WTC11 (cell line): ENCODE measurements at regions of chr22 and their contacts with region 1.

Region 1: GRCh38 chr22:30386960-30387827 is at the start of gene RNF215:
- DNase-seq: peak; percentile 96
- ATAC-seq: peak; percentile 83
- H3K4me3 Mint-ChIP-seq: peak within 1 kb of the TSS; percentile 79
- H3K27ac Mint-ChIP-seq: peak within 1 kb of the TSS; percentile 96
- H3K4me1 Mint-ChIP-seq: peaks cover 14% of the 10 kb centered on the region
- H3K27me3 Mint-ChIP-seq: peaks cover 11% of the 10 kb centered on the region
- CTCF ChIP-seq: peak; percentile 96
- total RNA-seq, gene RNF215: 25.4 to 28.6 TPM (median 27.6 TPM) in 3 replicates

Region 2: GRCh38 chr22:30262917-30263741 is 124.1 kb before region 1 on chr22:
- CTCF ChIA-PET with region 1: interaction called, 17 read pairs
- POLR2A ChIA-PET with region 1: no interaction called
- DNase-seq: peak; percentile 94
- ATAC-seq: peak; percentile 77
- H3K4me3 Mint-ChIP-seq: no peak overlapping the region
- H3K27ac Mint-ChIP-seq: no peak overlapping the region
- H3K4me1 Mint-ChIP-seq: peaks cover 7% of the 10 kb centered on the region
- H3K27me3 Mint-ChIP-seq: peaks cover 7% of the 10 kb centered on the region
- CTCF ChIP-seq: peak; percentile 99

Region 3: DNA sequence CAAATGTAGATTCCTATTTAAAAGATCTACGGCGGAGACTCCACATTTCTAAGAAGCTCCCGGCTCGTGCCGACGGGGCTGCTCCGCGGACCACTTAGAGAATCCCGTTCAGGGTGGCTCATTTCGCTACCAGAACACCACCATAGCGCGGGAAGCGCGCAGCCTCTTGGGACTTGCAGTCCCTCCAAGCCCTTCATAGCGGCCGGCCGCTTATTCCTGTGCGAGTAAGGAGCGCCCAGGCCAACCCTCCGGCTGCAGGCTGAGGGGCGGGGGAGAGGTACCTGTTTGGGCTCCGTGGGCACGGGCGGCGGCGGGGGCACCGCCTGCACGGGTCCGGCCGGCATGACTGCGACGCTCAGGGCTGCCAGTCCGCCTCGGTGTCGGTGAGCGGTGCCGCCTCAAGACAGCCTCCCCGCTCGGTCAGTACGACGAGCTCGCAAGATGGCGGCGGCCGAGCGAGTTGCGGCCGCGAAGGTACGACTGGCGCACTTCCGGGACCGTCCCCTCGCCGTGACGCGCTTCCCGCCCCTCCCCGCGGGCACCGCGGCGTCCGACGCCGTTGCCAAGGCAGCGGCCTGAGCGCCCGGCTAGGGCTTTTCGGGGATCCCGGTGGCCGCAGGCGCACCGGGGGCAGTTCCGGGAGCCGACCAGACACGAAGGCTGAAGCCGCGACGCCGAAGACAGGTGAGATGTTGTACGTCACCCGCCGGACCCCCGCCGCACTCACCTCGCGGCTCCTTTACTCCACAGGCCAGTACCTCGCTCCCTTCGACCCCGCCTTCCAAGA is 30.6 kb before region 1 on chr22 and contains the starts of genes CCDC157 and SF3A1:
- CTCF ChIA-PET with region 1: interaction called, 25 read pairs
- POLR2A ChIA-PET with region 1: interaction called, 3 read pairs
- DNase-seq: peak; percentile 91
- ATAC-seq: peak; percentile 90
- H3K4me3 Mint-ChIP-seq: peak within 1 kb of the TSS; percentile 95
- H3K27ac Mint-ChIP-seq: peak within 1 kb of the TSS; percentile 95
- H3K4me1 Mint-ChIP-seq: peaks cover 20% of the 10 kb centered on the region
- H3K27me3 Mint-ChIP-seq: no peaks in the 10 kb centered on the region
- CTCF ChIP-seq: no peak
- total RNA-seq, gene CCDC157: 3.8 to 6.5 TPM (median 4.2 TPM) in 3 replicates
- total RNA-seq, gene SF3A1: 214 to 272 TPM (median 227 TPM) in 3 replicates

Region 4: DNA sequence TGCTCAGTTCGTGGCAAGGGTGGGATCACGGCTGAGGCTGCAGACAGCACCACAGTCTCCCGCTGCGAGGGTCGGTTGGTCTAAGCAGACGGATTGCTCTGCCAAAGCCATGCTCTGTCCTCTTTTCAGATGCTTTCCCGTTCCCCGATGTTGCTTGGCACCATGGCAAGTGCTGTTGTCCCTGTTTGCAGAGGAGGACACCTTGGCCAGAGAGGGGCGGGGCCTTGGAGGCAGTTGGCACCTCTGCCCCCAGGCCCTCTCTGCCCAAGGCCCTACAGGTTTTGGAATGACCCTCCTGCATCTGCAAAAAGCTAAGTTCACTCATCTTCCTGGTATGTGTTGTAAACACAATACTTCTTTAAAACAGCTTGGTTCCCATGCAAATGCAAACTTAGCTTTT is 18.8 kb before region 1 on chr22:
- CTCF ChIA-PET with region 1: interaction called, 17 read pairs
- POLR2A ChIA-PET with region 1: interaction called, 3 read pairs
- DNase-seq: no peak
- ATAC-seq: no peak
- H3K4me3 Mint-ChIP-seq: no peak overlapping the region
- H3K27ac Mint-ChIP-seq: 0 out of 2 replicates have a peak overlapping the region, but pooled peaks have one; percentile 22
- H3K4me1 Mint-ChIP-seq: peaks cover 3% of the 10 kb centered on the region
- H3K27me3 Mint-ChIP-seq: no peaks in the 10 kb centered on the region
- CTCF ChIP-seq: no peak

Region 5: DNA sequence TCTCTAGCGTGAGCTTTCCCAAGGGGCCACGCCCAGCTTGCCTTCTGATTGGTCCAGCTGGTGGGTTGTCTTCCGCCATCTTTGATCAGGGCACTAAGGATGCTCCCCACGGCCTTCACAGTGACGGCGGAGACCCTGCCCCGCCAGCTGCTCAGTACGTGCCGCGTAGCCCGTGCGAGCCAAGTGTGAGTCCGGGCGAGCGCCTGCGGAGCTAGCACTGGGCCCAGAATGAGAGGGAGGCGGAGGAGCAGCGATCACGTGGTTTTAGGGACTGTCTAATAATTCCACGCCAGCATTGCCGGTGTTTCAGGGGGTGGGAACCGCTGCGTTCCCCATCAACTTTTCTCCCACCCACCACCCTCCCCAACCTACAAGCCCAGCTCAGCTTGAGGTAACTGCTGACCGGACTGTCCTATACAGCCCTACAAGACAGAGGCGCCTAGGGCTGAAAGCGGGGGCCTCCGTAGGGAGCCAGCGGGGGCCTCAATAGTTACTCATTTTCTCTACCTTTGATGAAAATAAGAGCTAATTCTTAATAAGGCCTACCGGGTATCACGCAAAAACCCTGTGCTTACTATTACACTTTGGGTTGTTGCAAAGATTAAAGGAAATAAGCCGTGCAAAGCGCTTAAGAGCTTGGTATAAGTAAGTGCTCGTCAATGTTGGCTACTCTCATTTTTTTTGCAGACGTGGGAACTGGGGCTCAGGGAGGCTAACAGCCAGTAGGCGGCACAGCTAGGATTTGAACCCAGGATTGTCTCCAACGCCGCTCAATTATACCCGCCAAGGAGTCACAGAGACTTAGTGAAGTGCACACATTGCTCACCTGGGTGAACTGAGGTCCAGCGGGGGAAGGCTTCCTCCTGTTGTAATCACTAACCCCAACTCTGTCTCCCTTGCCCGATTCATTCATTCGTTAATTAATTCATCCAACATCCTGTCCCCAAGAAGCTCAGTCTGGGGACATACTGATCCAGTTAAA is 37.1 kb after region 1 on chr22:
- CTCF ChIA-PET with region 1: interaction called, 149 read pairs
- POLR2A ChIA-PET with region 1: interaction called, 11 read pairs
- DNase-seq: peak; percentile 98
- ATAC-seq: peak; percentile 78
- H3K4me3 Mint-ChIP-seq: peak overlapping the region; percentile 83
- H3K27ac Mint-ChIP-seq: peak overlapping the region; percentile 99
- H3K4me1 Mint-ChIP-seq: peaks cover 32% of the 10 kb centered on the region
- H3K27me3 Mint-ChIP-seq: no peaks in the 10 kb centered on the region; the same call in 1 of the 2 replicates
- CTCF ChIP-seq: no peak